Mammary epithelial cell (primary cell): ENCODE measurements at regions of chr9 and their contacts with region 1.

Region 1: DNA sequence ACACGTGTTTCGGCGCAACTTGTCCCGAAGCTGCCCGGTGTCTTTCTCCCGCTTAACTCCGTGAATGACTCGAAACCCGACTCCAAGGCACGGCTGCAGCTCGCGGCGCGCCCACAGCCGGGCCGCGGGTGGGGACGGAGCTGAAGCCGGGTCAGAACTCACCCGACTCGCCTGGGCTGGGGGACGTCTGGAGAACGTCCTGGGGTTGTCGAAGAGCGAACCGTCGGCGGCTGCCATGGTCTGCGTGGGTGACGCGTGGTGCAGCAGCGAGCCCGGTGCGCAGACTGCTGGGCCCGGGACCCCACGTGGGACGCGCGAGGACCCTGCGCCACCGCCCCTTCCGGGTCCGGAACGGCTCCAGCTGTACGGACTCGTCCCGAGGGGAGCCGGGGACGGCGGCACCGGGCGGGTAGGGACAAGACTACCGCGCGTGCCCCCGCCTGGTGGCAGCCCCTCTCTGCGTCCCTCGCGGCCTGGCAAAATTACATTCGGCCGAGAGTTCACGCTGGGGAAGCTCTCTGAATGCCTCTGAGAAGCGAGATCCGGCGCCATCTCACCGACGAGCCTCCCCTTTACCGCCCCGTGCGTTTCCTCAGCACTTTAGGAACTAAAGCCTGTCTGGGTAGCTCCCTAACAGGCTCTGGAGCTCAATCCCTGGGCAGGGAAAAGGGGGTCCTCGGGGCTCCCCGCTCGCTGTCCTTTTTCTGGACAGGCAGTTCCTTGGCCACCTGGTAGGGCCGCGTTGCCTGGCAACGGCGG is at the start of gene DDX31:
- DNase-seq: peak; percentile 80
- H3K4me3 ChIP-seq: peak within 1 kb of the TSS; percentile 50 to 95 (median 91)
- H3K27ac ChIP-seq: peak within 1 kb of the TSS; percentile 82
- H3K4me1 ChIP-seq: peaks cover 23% of the 10 kb centered on the region
- H3K27me3 ChIP-seq: no peaks in the 10 kb centered on the region
- CTCF ChIP-seq: peak in 1 of 2 donors; percentile 4
- total RNA-seq, gene DDX31: 22.7 to 27.0 TPM

Region 2: DNA sequence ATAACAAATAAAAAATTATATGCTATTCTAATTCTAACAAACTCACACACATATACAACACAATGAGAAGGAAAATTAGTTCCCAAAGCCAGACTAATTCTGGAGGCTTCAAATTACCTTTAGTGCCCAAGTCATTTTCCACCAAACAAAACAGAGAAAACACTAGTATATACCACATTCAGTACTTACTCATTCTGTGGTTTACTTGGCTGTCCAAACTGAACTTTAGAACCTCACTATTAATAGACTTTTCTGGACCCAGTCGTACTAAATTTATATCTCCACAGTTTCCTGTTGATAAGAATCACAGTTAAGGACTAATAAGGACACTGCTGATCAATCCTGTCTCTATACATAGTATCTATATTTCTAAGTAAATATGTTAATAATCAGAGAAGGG is 381.5 kb before region 1 on chr9:
- CTCF ChIA-PET with region 1: no interaction called
- dilution Hi-C with region 1: loop called (anchors 10 kb)
- in situ Hi-C with region 1: no loop called
- intact Hi-C with region 1: no loop called
- DNase-seq: peak; percentile 9
- H3K4me3 ChIP-seq: no peak overlapping the region
- H3K27ac ChIP-seq: no peak overlapping the region
- H3K4me1 ChIP-seq: no peaks in the 10 kb centered on the region
- H3K27me3 ChIP-seq: no peaks in the 10 kb centered on the region
- CTCF ChIP-seq: no peak

Region 3: DNA sequence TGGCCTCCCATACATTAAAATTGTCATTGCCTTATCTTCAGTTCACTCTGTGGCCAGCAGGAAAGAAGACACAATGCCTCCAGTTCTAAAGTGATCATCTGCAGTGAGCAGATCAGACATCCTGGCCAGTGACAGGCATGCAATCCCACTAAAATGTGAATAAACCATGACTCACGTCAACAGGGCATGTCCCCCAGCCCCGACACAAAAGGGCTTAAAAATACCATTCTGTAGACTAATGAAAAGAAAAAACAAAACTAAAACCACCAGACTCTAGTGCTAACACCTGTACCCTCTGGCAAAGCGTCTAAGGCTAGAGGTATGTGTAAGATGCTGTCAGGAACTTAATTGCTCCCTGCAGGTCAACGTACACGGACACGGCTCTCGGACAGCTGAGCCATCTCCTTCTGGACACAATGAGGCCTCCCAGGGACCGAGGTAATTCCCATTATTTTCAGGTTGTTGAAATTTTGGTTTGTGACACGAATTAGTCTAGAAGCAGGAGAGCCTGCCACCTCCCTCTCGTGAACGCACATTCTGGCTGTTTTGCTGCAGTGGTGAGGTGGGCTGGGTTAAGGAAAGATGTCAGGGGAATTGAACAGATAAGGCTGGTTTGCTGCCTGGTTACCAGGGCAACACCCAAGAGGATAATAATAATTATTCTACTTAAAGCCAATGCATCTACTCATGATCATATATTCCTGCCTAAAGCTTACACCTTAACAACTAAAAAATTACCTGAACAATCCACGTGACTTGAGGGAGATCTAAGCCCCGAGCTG is 38.4 kb before region 1 on chr9:
- CTCF ChIA-PET with region 1: no interaction called
- dilution Hi-C with region 1: no loop called
- in situ Hi-C with region 1: no loop called
- intact Hi-C with region 1: loop called (anchors 1 kb)
- DNase-seq: peak; percentile 94
- H3K4me3 ChIP-seq: peak overlapping the region in 1 of 3 experiments; percentile 33
- H3K27ac ChIP-seq: peak overlapping the region; percentile 86
- H3K4me1 ChIP-seq: peaks cover 35% of the 10 kb centered on the region
- H3K27me3 ChIP-seq: no peaks in the 10 kb centered on the region
- CTCF ChIP-seq: peak; percentile 12 to 33

Region 4: GRCh38 chr9:132756214-132756845 is 86.5 kb after region 1 on chr9:
- CTCF ChIA-PET with region 1: no interaction called
- dilution Hi-C with region 1: loop called (anchors 5 kb)
- in situ Hi-C with region 1: no loop called
- intact Hi-C with region 1: loop called (anchors 10 kb)
- DNase-seq: no peak
- H3K4me3 ChIP-seq: no peak overlapping the region
- H3K27ac ChIP-seq: no peak overlapping the region
- H3K4me1 ChIP-seq: no peaks in the 10 kb centered on the region
- H3K27me3 ChIP-seq: peaks cover 4% of the 10 kb centered on the region
- CTCF ChIP-seq: no peak

Region 5: GRCh38 chr9:132800038-132800648 is 130.3 kb after region 1 on chr9:
- CTCF ChIA-PET with region 1: no interaction called
- dilution Hi-C with region 1: no loop called
- in situ Hi-C with region 1: no loop called
- intact Hi-C with region 1: loop called (anchors 2 kb)
- DNase-seq: peak; percentile 57
- H3K4me3 ChIP-seq: no peak overlapping the region
- H3K27ac ChIP-seq: no peak overlapping the region
- H3K4me1 ChIP-seq: no peaks in the 10 kb centered on the region
- H3K27me3 ChIP-seq: no peaks in the 10 kb centered on the region
- CTCF ChIP-seq: peak; percentile 78 to 85

Region 6: GRCh38 chr9:132901856-132902831 is 232.3 kb after region 1 on chr9:
- CTCF ChIA-PET with region 1: no interaction called
- dilution Hi-C with region 1: no loop called
- in situ Hi-C with region 1: no loop called
- intact Hi-C with region 1: loop called (anchors 10 kb)
- DNase-seq: peak; percentile 75
- H3K4me3 ChIP-seq: no peak overlapping the region
- H3K27ac ChIP-seq: no peak overlapping the region
- H3K4me1 ChIP-seq: no peaks in the 10 kb centered on the region
- H3K27me3 ChIP-seq: no peaks in the 10 kb centered on the region
- CTCF ChIP-seq: peak; percentile 93 to 99